Colonic mucosa (tissue), 4 donors: ENCODE measurements at regions of chr11 and their contacts with region 1.

Region 1: DNA sequence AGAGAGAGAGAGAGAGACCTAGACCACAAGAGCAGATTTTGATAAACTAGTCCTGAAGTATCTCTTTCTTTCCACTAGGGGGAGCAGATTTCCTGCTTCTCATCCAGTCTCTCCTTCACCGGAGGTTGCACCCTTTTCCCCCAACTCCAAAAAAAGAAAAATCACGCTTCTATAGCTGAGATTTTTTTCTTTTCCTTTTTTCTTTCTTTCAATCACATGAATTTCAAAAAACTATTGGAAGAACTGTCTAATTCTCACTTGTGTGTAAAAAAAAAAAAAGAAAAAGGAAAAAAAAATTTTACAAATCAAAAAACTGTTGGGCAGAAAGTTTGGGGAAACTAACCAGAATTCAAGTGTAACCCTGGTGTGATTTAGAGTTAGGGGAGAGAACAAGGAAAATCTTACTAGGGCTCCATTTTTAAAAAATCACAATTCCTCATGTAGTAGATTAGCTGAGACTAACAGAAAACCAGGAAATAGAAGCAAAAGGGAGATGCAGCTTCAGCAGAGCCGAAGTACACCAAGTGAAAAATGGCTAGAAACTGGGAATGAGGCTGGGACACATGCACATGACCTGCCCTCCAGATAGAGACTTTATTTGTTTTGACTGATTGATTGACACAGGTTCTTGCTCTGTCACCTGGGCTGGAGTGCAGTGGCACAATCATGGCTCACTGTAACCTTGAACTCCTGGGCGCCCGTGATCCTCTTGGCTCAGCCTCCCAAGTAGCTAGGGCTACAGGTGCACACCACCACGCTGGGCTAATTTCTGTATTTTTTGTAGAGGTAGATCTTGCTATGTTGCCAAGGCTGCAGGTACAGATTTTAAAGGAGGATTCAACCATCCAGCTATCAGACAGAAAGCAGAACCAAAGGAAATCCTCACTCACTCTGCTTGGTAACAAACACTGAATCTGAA is 27.1 kb downstream of the SDHD start:
- DNase-seq: no peak
- H3K4me3 ChIP-seq: no peak overlapping the region
- H3K27ac ChIP-seq: no peak overlapping the region
- H3K4me1 ChIP-seq: no peaks in the 10 kb centered on the region
- H3K27me3 ChIP-seq: no peaks in the 10 kb centered on the region
- CTCF ChIP-seq: peak; percentile 49

Region 2: DNA sequence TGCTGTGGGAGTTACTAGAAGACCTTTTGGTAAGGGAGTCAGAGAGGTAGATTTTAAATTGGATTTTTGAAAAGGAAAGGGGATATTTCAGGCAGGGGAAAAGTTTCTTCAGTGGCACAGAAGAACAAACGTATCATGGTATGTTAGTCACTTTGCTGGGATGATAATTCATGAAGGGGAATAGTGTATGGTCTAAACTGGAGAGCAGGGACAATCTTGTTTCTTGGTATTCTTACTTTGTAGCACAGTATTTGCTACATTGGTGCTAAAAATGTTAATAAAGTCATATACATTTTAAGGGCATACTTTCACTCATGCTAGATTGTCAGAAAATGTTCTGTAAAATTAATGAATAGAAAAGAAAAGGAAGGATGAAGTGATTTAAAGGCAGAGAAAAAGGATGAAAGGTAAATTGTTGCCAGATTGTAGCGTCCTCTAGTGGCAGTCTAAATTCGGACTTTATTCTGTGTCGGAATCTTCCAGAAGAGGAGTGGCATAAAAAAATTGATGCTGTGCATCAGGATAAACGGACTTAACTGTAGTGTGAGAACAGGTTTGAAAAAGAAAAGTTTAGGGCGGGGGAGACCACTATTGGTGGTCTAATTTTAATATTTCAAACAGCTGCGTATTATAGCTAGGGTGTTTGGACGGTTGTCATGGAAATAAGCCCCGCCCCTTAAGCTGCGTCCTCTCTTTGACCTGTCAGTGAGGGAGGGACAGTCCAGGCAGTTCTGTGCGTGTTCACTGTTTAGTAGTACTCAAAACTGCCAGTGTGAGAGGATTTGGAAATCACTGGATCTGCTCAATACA is 61.2 kb after region 1 on chr11 and contains the start of gene BCO2:
- intact Hi-C with region 1: loop called (anchors 2 kb)
- DNase-seq: peak; percentile 92
- H3K4me3 ChIP-seq: peak within 1 kb of the TSS; percentile 12
- H3K27ac ChIP-seq: no peak within 1 kb of the TSS
- H3K4me1 ChIP-seq: no peaks in the 10 kb centered on the region
- H3K27me3 ChIP-seq: no peaks in the 10 kb centered on the region
- CTCF ChIP-seq: peak; percentile 86
- total RNA-seq, gene BCO2: 1.7 to 6.0 TPM

Region 3: DNA sequence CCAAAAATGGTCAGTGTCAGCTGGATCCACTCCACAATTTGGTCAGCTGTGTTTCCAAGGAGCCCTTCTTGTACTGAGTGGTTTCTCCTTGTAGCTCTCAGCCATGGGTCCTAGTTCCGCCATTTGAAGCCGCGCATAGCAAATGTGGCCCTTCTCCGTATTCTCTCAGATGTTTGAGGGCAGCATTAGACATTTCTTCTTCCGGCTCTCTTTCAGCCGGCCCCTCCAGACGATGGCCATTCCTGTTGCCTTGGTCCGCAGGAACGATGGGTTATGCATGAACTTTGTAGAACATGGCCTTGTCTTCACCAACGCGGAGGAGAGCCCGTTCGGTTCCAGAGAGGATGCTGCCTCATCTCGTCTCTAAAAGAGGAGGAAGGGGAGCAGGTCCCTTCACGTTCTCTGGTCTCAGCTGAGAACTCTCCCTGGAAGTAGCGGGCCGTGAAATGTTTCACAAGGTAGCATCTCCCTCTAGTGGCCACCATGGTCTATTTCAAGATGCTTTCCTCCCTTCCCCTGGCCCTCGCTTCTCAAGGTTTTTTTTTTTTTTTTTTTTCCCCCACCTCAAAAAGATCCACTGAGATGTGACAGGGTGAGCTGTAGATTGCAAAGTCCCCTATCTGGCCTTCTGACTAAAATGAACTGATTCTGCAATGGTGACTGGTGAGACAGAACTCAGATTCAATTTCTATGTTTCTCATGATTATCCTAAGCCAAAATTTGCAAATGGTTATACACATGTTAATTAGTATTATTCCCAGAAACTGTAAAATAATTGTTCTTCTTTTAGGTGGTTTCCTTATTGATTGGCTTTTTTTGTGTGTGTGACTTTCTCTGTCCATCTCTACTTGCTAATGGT is 166.7 kb after region 1 on chr11:
- intact Hi-C with region 1: loop called (anchors 5 kb)
- DNase-seq: peak; percentile 77
- H3K4me3 ChIP-seq: peak overlapping the region; percentile 40
- H3K27ac ChIP-seq: no peak overlapping the region
- H3K4me1 ChIP-seq: peaks cover 4% of the 10 kb centered on the region
- H3K27me3 ChIP-seq: no peaks in the 10 kb centered on the region
- CTCF ChIP-seq: peak; percentile 34